OCI-LY7 (cell line): ENCODE measurements at regions of chr9 and their contacts with region 1.

Region 1: GRCh38 chr9:124743686-124744348 is 27.3 kb downstream of the NR6A1 start:
- DNase-seq: no peak
- H3K4me3 ChIP-seq: no peak overlapping the region
- H3K27ac ChIP-seq: no peak overlapping the region
- H3K4me1 ChIP-seq: peaks cover 7% of the 10 kb centered on the region
- CTCF ChIP-seq: no peak

Region 2: GRCh38 chr9:124725068-124725452 is 18.8 kb before region 1 on chr9:
- CTCF ChIA-PET with region 1: no interaction called
- POLR2A ChIA-PET with region 1: interaction called, 14 read pairs
- intact Hi-C with region 1: no loop called
- DNase-seq: no peak
- H3K4me3 ChIP-seq: no peak overlapping the region
- H3K27ac ChIP-seq: no peak overlapping the region
- H3K4me1 ChIP-seq: no peaks in the 10 kb centered on the region
- CTCF ChIP-seq: no peak